Common myeloid progenitor, CD34-positive (primary cell): ENCODE measurements at regions of chr2 and their contacts with region 1.

Region 1: DNA sequence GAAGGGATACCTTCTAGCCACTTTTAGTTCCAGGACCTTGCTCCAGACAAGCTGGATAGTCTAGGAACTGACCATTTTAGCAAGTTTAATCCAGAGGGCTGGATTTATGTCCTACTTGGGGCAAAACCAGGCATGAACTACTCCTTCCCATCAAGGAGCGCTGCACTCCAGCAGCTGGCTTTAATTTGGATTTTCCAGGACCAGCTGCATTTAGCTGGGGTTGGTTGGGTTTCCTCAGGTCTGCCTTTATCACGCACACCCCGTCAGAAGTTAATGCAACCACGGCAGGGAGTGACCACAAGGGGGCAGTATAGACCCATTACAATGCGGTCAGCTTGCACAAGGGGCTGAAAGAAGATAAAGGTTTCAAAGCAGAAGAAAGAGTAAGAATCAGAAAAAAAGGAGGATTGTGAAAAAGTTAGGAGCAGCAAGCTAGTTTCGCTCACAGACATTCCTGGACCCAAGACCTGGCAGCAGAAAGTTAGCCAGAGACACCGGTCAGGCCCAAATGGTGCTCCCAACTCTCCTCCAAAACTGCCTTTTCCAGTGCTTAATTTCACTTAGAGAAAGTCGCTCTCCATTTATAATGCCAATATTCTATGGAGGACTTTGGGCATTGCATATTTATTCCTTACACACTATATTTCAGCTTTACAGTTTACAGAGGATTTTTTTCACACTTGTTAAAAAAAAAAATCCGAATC is 40.1 kb downstream of the SLC4A1AP start:
- DNase-seq: peak; percentile 85 to 95 (median 90)
- H3K4me3 ChIP-seq: no peak overlapping the region
- H3K27ac ChIP-seq: no peak overlapping the region
- H3K4me1 ChIP-seq: peaks cover 0 to 7% (median 1%) of the 10 kb centered on the region in 4 experiments
- H3K27me3 ChIP-seq: peaks cover 0 to 2% (median 0%) of the 10 kb centered on the region in 5 experiments

Region 2: GRCh38 chr2:27638037-27638637 is 65.7 kb before region 1 on chr2:
- CTCF ChIA-PET with region 1: no interaction called
- POLR2A ChIA-PET with region 1: no interaction called
- DNase-seq: no peak
- H3K4me3 ChIP-seq: no peak overlapping the region
- H3K27ac ChIP-seq: no peak overlapping the region
- H3K4me1 ChIP-seq: no peaks in the 10 kb centered on the region
- H3K27me3 ChIP-seq: no peaks in the 10 kb centered on the region

Region 3: DNA sequence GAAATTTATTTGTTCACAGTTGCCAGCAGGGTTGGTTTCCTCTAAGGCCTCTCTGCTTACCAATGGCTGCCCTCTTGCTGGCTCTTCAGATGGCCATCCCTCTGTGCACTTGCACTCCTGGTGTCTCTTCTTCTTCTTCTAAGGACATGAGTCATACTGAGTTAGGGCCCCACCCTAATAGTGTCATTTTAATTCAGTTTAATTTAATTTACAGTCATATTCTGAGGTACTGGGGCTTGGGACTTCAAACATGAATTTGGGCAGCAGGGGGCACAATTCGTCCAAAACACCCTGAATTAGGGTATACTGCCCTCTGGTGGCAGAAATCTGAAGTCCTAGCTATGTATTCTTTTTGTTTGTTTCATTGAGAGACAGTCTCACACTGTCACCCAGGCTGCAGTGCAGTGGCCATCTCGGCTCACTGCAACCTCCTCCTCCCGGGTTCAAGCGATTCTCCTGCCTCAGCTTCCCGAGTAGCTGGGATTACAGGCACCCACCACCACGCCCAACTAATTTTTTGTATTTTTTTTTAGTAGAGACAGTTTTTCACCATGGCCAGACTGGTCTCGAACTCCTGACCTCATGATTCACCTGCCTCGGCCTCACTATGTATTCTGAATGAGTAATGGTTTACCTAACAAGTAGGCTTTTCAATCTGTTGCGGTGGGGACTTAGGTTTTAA is 20.3 kb before region 1 on chr2:
- CTCF ChIA-PET with region 1: interaction called, 19 read pairs
- POLR2A ChIA-PET with region 1: no interaction called
- DNase-seq: peak; percentile 95 to 99 (median 96)
- H3K4me3 ChIP-seq: no peak overlapping the region
- H3K27ac ChIP-seq: no peak overlapping the region
- H3K4me1 ChIP-seq: peaks cover 0 to 5% (median 2%) of the 10 kb centered on the region in 4 experiments
- H3K27me3 ChIP-seq: no peaks in the 10 kb centered on the region

Region 4: GRCh38 chr2:27723372-27724144 is 19.8 kb after region 1 on chr2:
- CTCF ChIA-PET with region 1: interaction called, 13 read pairs
- POLR2A ChIA-PET with region 1: no interaction called
- DNase-seq: peak; percentile 39 to 63 (median 53)
- H3K4me3 ChIP-seq: no peak overlapping the region
- H3K27ac ChIP-seq: no peak overlapping the region
- H3K4me1 ChIP-seq: peaks cover 0 to 3% (median 1%) of the 10 kb centered on the region in 4 experiments
- H3K27me3 ChIP-seq: peaks cover 0 to 5% (median 0%) of the 10 kb centered on the region in 5 experiments

Region 5: GRCh38 chr2:27729198-27729597 is 25.4 kb after region 1 on chr2:
- CTCF ChIA-PET with region 1: interaction called, 13 read pairs
- POLR2A ChIA-PET with region 1: no interaction called
- DNase-seq: no peak
- H3K4me3 ChIP-seq: no peak overlapping the region
- H3K27ac ChIP-seq: no peak overlapping the region
- H3K4me1 ChIP-seq: peaks cover 0 to 3% (median 1%) of the 10 kb centered on the region in 4 experiments
- H3K27me3 ChIP-seq: no peaks in the 10 kb centered on the region